Activated CD4-positive, alpha-beta T cell treated with anti-CD3 and anti-CD28 coated beads, Interleukin-2, amount 10 ng/mL, durations not matched to agents 24 days and 14 days (primary cell): ENCODE measurements at regions of chr3 and their contacts with region 1.

Region 1: GRCh38 chr3:186930641-186931531 is 560 bp downstream of the ST6GAL1 start:
- DNase-seq: peak; percentile 90
- H3K4me3 Mint-ChIP-seq: peak overlapping the region; percentile 99
- H3K27ac Mint-ChIP-seq: peak overlapping the region; percentile 98
- H3K4me1 Mint-ChIP-seq: peaks cover 42% of the 10 kb centered on the region
- H3K27me3 Mint-ChIP-seq: no peaks in the 10 kb centered on the region

Region 2: GRCh38 chr3:186783073-186783730 is 147.7 kb before region 1 on chr3 and contains the start of gene EIF4A2:
- intact Hi-C with region 1: loop called (anchors 5 kb)
- DNase-seq: peak; percentile 97
- H3K4me3 Mint-ChIP-seq: peak within 1 kb of the TSS; percentile 100
- H3K27ac Mint-ChIP-seq: peak within 1 kb of the TSS; percentile 100
- H3K4me1 Mint-ChIP-seq: peaks cover 37% of the 10 kb centered on the region
- H3K27me3 Mint-ChIP-seq: peaks cover 3% of the 10 kb centered on the region
- total RNA-seq, gene EIF4A2: 502 and 507 TPM in 2 replicates

Region 3: DNA sequence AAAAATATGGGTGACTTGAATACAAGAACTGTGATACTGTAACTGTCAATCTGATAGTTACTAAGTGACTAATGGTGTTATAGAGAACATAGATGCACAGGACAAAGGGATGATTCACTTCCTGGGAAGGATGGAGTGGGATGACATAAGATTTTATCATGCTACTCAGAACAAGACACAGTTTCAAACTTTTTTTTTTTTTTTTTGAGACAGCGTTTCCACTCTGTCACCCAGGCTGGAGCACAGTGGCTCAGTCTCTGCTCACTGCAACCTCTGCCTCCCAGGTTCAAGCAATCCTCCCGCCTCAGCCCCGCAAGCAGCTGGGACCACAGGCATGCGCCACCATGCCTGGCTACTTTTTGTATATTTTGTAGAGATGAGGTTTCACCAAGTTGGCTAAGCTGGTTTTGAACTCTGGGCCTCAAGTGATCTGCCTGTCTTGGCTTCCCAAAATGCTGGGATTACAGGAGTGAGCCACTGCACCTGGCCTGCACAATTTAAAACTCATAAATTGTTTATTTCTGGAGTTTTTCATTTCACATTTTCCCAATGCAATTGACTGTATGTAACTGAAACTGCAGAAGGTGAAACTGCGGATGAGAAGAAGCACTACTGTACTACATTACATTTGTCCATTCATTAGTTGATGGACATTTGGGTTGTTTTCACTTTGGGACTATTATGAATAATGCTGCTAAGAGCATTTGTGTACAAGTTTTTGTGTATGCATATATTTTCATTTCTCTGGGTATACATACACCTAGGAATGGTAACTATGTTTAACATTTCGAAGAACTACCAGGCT is 47.8 kb before region 1 on chr3:
- intact Hi-C with region 1: loop called (anchors 1 kb)
- DNase-seq: peak; percentile 80
- H3K4me3 Mint-ChIP-seq: peak overlapping the region; percentile 52
- H3K27ac Mint-ChIP-seq: peak overlapping the region; percentile 89
- H3K4me1 Mint-ChIP-seq: peaks cover 53% of the 10 kb centered on the region
- H3K27me3 Mint-ChIP-seq: no peaks in the 10 kb centered on the region

Region 4: DNA sequence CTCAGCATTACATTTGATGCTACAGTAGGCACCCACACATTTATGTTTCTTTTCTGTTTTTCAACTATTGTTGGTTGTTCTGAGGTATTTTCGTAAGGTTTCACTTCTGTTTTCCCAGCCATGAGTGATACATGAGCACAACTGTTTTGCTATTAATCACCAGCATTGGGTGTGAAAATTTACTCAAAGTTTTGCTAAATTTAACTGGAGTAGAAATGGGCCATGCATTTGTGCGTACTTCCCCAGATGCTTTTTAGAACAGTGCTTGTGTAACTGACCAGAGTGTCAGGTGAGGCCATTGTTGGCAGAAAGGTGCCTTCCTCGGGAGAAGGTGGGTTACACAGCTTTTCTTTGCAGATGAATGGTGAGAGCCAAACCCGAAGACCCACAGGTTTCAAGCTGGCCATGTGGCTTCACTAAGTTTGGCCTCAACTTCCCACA is 69.8 kb after region 1 on chr3:
- intact Hi-C with region 1: loop called (anchors 1 kb)
- DNase-seq: peak; percentile 78
- H3K4me3 Mint-ChIP-seq: peak overlapping the region; percentile 63
- H3K27ac Mint-ChIP-seq: peak overlapping the region; percentile 87
- H3K4me1 Mint-ChIP-seq: peaks cover 56% of the 10 kb centered on the region
- H3K27me3 Mint-ChIP-seq: no peaks in the 10 kb centered on the region

Region 5: DNA sequence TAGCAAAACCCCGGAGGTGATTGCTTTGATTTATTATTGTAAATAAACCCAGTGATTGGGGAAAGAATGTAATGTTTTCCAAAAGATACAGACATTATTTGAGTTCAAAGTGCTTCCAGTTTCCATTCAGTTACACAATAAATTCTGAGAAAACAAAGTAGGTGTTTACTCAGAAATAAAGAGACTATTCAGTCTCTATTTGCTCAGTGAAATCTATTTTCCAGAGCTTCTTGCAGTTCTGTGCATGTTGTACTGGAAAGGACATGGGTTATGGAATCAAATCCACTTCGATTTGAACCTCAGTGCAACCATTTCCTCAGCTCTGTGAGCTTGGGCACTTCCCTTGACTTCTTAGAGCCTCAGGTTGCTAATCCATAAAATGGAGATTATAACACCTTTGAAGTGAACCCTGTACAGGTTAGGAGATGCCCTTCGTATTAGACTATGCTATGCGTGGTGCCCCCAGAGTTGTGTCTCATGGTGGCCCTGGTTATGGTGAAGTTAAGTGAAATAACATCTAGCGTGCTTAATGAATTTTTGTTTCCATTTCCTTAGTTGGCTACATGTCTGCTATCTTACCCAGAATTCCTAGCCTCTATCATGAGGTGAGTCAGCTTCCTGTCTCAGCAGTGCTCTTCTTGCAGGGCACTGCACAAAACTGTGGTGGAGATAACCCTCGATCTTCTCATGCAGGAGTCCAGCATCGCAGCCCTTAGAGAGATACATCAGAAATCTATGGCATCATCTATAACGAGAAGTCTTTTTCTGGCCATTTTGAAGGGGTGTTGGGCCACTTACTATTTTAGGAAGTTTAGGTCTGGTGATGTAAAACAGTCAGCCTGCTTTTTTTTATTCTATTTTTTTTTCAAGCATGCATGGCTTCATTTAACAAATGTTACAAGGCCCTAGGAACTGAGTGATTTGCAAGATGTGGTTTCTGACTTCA is 110.7 kb after region 1 on chr3:
- intact Hi-C with region 1: loop called (anchors 2 kb)
- DNase-seq: peak; percentile 88
- H3K4me3 Mint-ChIP-seq: peak overlapping the region; percentile 77
- H3K27ac Mint-ChIP-seq: peak overlapping the region; percentile 95
- H3K4me1 Mint-ChIP-seq: peaks cover 79% of the 10 kb centered on the region
- H3K27me3 Mint-ChIP-seq: no peaks in the 10 kb centered on the region

Region 6: GRCh38 chr3:187164885-187165543 is 234.1 kb after region 1 on chr3:
- intact Hi-C with region 1: loop called (anchors 10 kb)
- DNase-seq: peak; percentile 82
- H3K4me3 Mint-ChIP-seq: no peak overlapping the region
- H3K27ac Mint-ChIP-seq: no peak overlapping the region
- H3K4me1 Mint-ChIP-seq: peaks cover 4% of the 10 kb centered on the region
- H3K27me3 Mint-ChIP-seq: peaks cover 44% of the 10 kb centered on the region